ENCODE measurements at regions of chr3 and their contacts with region 1.

Region 1: DNA sequence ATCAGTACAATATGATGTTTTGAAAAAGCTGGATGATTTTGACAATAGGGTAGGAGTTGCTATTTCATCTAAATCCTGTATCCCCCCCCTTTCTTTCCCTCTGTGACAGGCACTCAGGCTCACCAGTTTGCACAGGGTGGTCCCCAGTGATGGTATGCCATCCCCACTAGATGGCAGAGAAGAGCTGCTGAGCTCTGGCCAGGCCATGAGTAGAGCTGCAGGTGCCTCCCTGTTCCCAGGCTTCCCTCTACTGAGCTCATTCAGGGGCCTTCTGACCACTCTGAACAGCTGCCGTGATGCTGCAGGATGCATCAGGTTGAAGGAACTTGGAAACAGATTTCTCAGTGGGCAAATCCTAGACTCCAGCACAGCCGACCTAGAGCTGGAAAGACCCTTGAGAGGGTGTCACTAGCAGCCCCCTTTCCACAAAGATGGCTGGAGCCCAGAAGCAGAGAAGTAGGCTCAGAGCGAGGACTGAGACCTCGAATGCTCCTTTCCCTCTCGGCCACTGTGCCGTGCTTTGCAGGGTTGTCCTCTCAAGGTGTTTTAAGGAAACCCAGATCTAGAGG is 45.1 kb downstream of the EFCAB12 start:
- DNase-seq: peak; percentile 83
- H3K4me3 ChIP-seq: peak overlapping the region in 1 of 2 experiments; percentile 6; a peak in 1 of 4 replicates
- H3K27ac ChIP-seq: no peak overlapping the region
- H3K4me1 ChIP-seq: peaks cover 0 to 15% of the 10 kb centered on the region in 2 experiments; a peak in 1 of 4 replicates
- H3K27me3 ChIP-seq: no peaks in the 10 kb centered on the region
- CTCF ChIP-seq: peak; percentile 75
- EP300 ChIP-seq: no peak
- RAD21 ChIP-seq: peak; percentile 88

Region 2: GRCh38 chr3:129428376-129429079 is 45.2 kb after region 1 on chr3 and contains the start of gene EFCAB12:
- CTCF ChIA-PET with region 1: interaction called, 11 read pairs
- POLR2A ChIA-PET with region 1: no interaction called
- DNase-seq: peak; percentile 93
- H3K4me3 ChIP-seq: peak within 1 kb of the TSS; percentile 61 to 62
- H3K27ac ChIP-seq: peak within 1 kb of the TSS; percentile 38 to 81; a peak in 3 of 4 replicates
- H3K4me1 ChIP-seq: peaks cover 0 to 12% of the 10 kb centered on the region in 2 experiments; a peak in 2 of 4 replicates
- H3K27me3 ChIP-seq: no peaks in the 10 kb centered on the region
- CTCF ChIP-seq: no peak; the same call in 1 of the 2 replicates
- EP300 ChIP-seq: no peak
- RAD21 ChIP-seq: no peak; the same call in 1 of the 2 replicates
- polyA plus RNA-seq, gene EFCAB12: 0.26 and 0.38 TPM in 2 replicates